A549 (cell line): ENCODE measurements at regions of chr17 and their contacts with region 1.

Region 1: GRCh38 chr17:38967290-38967738 is at the start of gene FBXO47:
- DNase-seq: peak; percentile 92 to 98
- ATAC-seq: peak; percentile 98 to 99
- H3K4me3 ChIP-seq: peak within 1 kb of the TSS; percentile 44
- H3K27ac ChIP-seq: peak within 1 kb of the TSS; percentile 78 to 84
- H3K4me1 ChIP-seq: peaks cover 9% of the 10 kb centered on the region; the same call in 2 of the 3 replicates
- CTCF ChIP-seq: no peak
- EP300 ChIP-seq: no peak
- POLR2A ChIP-seq: peak; percentile 61
- RAD21 ChIP-seq: 0 out of 5 replicates have a peak, but pooled peaks of 1 of the 2 experiments have one; percentile 17
- polyA plus RNA-seq, gene FBXO47: 0.04 TPM in 1 of 2 replicates, not detected in the other

Region 2: DNA sequence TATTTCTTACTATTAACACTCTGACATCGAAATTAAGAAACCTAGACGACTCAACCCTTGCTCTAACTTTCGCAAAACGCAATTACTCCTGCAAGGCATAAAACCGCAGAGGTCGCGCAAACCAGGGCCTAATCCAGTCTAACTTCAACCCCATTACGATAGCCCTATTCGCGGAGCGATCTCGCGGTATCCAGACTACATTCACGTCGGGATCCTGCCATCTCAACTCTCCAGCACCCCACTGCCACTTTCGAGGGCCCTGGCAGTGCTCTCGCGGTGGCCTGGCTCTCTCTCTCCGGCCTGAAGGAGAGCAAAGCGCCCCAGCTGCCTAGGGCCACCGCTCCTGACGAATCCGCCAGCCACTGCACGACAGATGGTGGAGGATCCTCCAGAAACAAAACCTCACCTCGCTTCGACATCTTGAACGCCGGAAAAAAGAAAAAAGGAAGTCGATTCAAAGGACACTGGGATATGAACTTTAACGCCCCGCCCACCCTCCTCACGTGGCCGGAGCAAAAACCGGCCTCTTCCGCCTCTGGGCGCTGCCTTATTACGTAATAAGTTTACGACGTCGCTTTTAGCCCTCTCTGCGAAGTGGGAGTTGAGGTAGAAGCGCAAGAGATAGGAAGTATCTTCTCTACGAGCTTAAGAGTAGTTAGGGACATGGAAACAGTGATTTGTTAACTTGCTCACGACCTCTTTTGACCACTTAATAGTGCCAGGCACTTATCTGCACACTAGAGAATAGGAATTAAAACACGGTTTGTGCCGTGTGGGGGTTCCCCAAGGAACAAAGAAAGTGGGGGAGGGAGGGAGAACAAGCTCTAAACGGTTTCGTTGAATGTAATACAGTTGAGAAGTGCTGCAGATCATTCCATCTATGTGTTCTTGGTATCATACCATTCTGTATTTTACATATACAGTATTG is 113.8 kb before region 1 on chr17 and contains the start of gene RPL23:
- CTCF ChIA-PET with region 1: interaction called, 3 read pairs
- POLR2A ChIA-PET with region 1: interaction called, 10 read pairs
- DNase-seq: peak; percentile 93 to 99
- ATAC-seq: peak; percentile 91 to 95
- H3K4me3 ChIP-seq: peak within 1 kb of the TSS; percentile 87
- H3K27ac ChIP-seq: peak within 1 kb of the TSS; percentile 85 to 93
- H3K4me1 ChIP-seq: peaks cover 24% of the 10 kb centered on the region
- CTCF ChIP-seq: no peak
- EP300 ChIP-seq: no peak
- POLR2A ChIP-seq: peak; percentile 97
- RAD21 ChIP-seq: peak in 1 of 2 experiments; percentile 10; a peak in 1 of 5 replicates
- polyA plus RNA-seq, gene RPL23: 2,297 and 2,715 TPM in 2 replicates